Activated T-helper 1 cell treated with anti-CD3 and anti-CD28 coated beads, Interleukin-12 subunit alpha, Interleukin-12 subunit beta, Interleukin-2, Interleukin-4 antibody, amounts not matched to agents 30 ng/mL and 10 ng/mL and 1 ng/mL, durations not matched to agents 14 hours and 24 hours and 36 hours (primary cell): ENCODE measurements at regions of chr5 and their contacts with region 1.

Region 1: DNA sequence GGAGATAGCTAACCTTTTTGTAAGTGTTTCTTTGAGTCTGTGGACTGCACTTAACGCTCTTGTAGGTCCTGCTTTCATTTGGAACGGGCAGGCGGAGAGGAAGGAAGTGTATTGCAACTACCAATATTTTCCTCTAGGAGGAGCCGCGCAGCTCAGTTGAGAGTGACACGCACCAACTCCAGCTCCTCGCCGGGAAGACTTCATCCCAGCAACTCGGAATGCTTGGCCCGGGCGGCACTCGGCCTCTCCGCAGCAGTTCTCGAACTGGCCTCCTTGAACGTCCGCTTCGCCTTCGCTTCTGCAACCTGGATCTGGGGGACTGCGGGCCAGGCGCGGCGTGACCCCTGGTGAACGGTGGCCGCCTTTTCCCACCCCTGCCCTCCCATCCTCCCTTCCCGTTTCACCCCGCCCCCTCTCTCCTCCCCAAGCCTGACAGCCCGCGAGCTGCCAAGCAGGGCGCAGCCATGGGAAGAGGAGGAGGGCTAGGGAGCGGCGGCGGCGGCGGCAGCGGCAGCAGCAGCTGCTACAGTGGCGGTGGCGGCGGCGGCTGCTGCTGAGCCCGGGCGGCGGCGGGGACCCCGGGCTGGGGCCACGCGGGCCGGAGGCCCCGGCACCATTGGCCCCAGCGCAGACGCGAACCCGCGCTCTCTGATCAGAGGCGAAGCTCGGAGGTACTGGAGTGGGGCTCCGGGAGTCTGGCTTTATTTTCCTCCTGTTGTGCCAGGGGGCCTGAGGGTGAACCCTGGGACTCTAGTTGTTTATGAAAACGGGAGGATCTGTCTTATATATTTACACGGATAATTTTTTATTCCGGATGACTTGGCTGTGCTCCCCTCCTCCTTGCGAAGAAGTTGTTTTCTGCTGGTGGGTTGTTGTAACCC is at the start of gene GHR:
- DNase-seq: no peak
- H3K4me3 Mint-ChIP-seq: no peak within 1 kb of the TSS
- H3K27ac Mint-ChIP-seq: no peak within 1 kb of the TSS
- H3K4me1 Mint-ChIP-seq: no peaks in the 10 kb centered on the region
- H3K27me3 Mint-ChIP-seq: peaks cover 10% of the 10 kb centered on the region
- total RNA-seq, gene GHR: not detected in 2 replicates

Region 2: GRCh38 chr5:41978676-41979075 is 444.8 kb before region 1 on chr5:
- intact Hi-C with region 1: no loop called
- DNase-seq: no peak
- H3K4me3 Mint-ChIP-seq: no peak overlapping the region
- H3K27ac Mint-ChIP-seq: no peak overlapping the region
- H3K4me1 Mint-ChIP-seq: no peaks in the 10 kb centered on the region
- H3K27me3 Mint-ChIP-seq: peaks cover 5% of the 10 kb centered on the region

Region 3: DNA sequence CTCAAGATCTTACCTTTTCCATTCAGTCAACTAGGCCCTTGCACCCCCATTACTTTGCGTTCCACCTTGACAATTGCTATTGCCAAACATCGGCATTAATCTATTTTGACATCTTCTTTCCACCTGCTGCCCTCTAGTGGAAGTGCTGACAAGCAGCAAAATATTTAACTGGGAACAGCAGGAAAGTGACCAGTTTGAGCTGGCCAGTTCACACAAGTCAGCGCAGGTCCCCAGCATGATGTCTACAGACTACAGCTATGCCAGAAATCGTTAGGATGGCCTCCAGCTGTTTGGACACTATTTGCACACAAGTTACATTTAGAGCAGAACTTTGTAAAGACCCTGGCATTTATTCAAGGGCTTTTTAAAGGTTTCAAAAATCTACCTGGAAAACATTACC is 159.8 kb after region 1 on chr5:
- intact Hi-C with region 1: loop called (anchors 5 kb)
- DNase-seq: peak; percentile 4
- H3K4me3 Mint-ChIP-seq: no peak overlapping the region
- H3K27ac Mint-ChIP-seq: no peak overlapping the region
- H3K4me1 Mint-ChIP-seq: no peaks in the 10 kb centered on the region
- H3K27me3 Mint-ChIP-seq: peaks cover 13% of the 10 kb centered on the region

Region 4: GRCh38 chr5:42994246-42995151 is 571.0 kb after region 1 on chr5:
- intact Hi-C with region 1: no loop called
- DNase-seq: peak; percentile 84
- H3K4me3 Mint-ChIP-seq: peak overlapping the region; percentile 98
- H3K27ac Mint-ChIP-seq: peak overlapping the region; percentile 100
- H3K4me1 Mint-ChIP-seq: peaks cover 60% of the 10 kb centered on the region
- H3K27me3 Mint-ChIP-seq: peaks cover 3% of the 10 kb centered on the region